Natural killer cell (primary cell): ENCODE measurements at regions of chr12 and their contacts with region 1.

Region 1: GRCh38 chr12:125049093-125049458 is 16.2 kb upstream of the AACS start:
- DNase-seq: no peak
- ATAC-seq: no peak
- H3K4me3 ChIP-seq: peak overlapping the region; percentile 77
- H3K4me3 Mint-ChIP-seq: peak overlapping the region; percentile 88
- H3K27ac ChIP-seq: peak overlapping the region; percentile 60
- H3K27ac Mint-ChIP-seq: peak overlapping the region; percentile 58 to 89
- H3K4me1 ChIP-seq: peaks cover 12% of the 10 kb centered on the region
- H3K4me1 Mint-ChIP-seq: peaks cover 0 to 10% of the 10 kb centered on the region in 2 donors
- H3K27me3 ChIP-seq: no peaks in the 10 kb centered on the region
- H3K27me3 Mint-ChIP-seq: no peaks in the 10 kb centered on the region
- CTCF ChIP-seq: no peak

Region 2: DNA sequence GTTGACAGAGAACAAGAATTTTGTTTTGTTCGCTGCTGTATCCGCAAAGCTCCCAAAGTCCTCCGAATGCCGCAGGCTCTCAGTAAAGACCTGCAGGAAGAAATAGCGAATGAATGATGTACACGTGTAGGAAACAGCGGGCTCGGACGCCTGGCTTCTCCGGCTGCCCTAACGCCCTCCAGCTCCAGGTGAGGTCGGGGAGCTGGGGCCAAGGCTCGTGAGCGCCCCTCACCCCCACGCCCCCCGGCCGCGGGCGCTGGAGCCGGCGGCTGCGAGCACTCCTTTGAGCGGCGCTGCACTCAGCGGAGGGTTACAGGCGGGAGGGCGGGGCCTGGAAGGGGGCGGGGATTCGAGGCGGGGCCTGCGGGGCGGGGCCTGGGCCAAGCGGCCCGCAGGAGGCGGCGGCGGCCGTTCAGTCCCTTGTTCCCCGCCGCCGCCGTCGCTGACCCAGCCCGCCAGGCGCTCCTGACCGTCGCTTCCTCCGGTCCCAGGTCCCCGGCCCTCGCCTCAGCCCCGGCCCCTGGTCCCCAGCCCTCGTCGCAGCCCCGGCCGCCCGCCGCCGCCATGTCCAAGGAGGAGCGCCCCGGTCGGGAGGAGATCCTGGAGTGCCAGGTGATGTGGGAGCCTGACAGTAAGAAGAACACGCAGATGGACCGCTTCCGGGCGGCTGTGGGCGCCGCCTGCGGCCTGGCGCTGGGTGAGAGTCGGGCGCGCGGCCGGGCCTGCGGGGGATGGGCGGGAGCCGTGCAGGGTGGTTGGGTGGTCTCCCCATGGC is 16.1 kb after region 1 on chr12 and contains the start of gene AACS:
- intact Hi-C with region 1: loop called (anchors 1 kb)
- DNase-seq: peak; percentile 64 to 86
- ATAC-seq: peak; percentile 98
- H3K4me3 ChIP-seq: peak within 1 kb of the TSS; percentile 55
- H3K4me3 Mint-ChIP-seq: peak within 1 kb of the TSS; percentile 89
- H3K27ac ChIP-seq: no peak within 1 kb of the TSS
- H3K27ac Mint-ChIP-seq: peak within 1 kb of the TSS in 1 of 2 donors; percentile 78
- H3K4me1 ChIP-seq: peaks cover 12% of the 10 kb centered on the region
- H3K4me1 Mint-ChIP-seq: peaks cover 8 to 23% of the 10 kb centered on the region in 2 donors
- H3K27me3 ChIP-seq: no peaks in the 10 kb centered on the region
- H3K27me3 Mint-ChIP-seq: peaks cover 0 to 7% of the 10 kb centered on the region in 2 donors
- CTCF ChIP-seq: no peak
- total RNA-seq, gene AACS: 14.6 to 20.4 (median 18.1) TPM

Region 3: DNA sequence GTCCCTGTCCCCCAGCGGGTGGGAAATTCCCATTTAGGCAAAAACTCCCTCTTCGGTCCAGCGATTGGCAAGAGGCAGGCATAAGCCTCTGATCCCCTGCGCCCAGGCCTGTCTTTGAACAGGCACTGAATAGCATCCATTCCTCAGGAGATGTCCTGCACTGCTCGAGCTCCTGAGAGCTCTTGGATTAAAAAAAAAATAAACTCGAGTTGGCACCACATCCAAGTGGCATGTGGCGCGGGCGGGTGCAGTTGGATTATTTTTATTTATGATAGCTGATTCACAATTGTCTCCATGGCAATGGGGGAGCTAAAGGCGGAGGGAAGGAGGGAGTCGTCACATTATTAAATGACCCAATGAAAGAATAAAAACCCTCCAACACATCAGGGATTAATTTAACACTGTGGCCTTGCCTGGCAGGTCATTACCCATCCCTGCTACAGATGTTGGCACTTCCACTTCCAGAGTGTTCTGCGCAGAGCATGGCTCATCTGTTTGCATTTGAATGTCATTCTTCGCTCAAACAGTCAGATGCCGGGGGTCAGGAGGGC is 223.4 kb after region 1 on chr12:
- intact Hi-C with region 1: no loop called
- DNase-seq: no peak
- ATAC-seq: no peak
- H3K4me3 ChIP-seq: no peak overlapping the region
- H3K4me3 Mint-ChIP-seq: no peak overlapping the region
- H3K27ac ChIP-seq: no peak overlapping the region
- H3K27ac Mint-ChIP-seq: no peak overlapping the region
- H3K4me1 ChIP-seq: no peaks in the 10 kb centered on the region
- H3K4me1 Mint-ChIP-seq: no peaks in the 10 kb centered on the region
- H3K27me3 ChIP-seq: no peaks in the 10 kb centered on the region
- H3K27me3 Mint-ChIP-seq: peaks cover 10 to 11% of the 10 kb centered on the region in 2 donors
- CTCF ChIP-seq: no peak